ENCODE measurements at regions of chr6 and their contacts with region 1.

Region 1: DNA sequence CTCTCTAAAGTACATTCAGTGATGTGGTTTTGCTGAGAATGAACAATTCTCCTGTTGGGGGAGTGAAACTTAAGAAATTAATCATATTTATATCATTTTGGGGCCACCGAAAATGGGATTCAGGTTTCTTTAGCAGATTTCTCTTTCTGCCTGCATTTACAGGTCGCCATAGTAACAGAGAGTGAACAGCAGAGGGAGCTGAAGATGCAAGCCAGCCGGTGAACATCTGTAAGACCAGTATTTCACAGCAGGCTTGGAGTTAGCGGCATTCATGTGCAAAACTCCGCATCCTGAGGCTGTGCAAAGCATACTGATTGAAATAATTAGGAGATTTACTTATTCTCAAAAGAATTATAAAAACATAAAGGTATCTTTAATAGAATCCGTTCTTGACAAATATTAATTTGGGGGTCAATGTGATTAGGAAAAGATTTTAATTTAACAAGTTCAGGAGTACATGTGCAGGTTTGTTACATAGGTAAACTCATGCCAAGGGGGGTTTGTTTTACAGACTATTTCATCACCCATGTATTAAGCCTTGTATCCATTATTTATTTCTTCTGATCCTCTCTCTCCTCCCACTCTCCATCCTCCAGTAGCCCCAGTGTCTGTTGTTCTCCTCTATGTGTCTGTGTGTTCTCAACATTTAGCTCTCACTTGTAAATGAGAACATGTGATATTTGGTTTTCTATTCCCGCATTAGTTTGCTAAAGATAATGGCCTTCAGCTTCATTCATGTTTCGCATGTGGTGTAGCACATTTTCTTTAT is 17.8 kb upstream of the HSF2 start:
- DNase-seq: peak; percentile 61
- H3K4me3 Mint-ChIP-seq: no peak overlapping the region
- H3K27ac Mint-ChIP-seq: no peak overlapping the region
- H3K4me1 Mint-ChIP-seq: no peaks in the 10 kb centered on the region
- H3K27me3 Mint-ChIP-seq: peaks cover 37% of the 10 kb centered on the region
- CTCF ChIP-seq: peak; percentile 67

Region 2: GRCh38 chr6:122428781-122429180 is 47.1 kb after region 1 on chr6:
- CTCF ChIA-PET with region 1: no interaction called
- POLR2A ChIA-PET with region 1: no interaction called
- intact Hi-C with region 1: no loop called
- DNase-seq: no peak
- H3K4me3 Mint-ChIP-seq: no peak overlapping the region
- H3K27ac Mint-ChIP-seq: no peak overlapping the region
- H3K4me1 Mint-ChIP-seq: no peaks in the 10 kb centered on the region
- H3K27me3 Mint-ChIP-seq: no peaks in the 10 kb centered on the region
- CTCF ChIP-seq: no peak

Region 3: DNA sequence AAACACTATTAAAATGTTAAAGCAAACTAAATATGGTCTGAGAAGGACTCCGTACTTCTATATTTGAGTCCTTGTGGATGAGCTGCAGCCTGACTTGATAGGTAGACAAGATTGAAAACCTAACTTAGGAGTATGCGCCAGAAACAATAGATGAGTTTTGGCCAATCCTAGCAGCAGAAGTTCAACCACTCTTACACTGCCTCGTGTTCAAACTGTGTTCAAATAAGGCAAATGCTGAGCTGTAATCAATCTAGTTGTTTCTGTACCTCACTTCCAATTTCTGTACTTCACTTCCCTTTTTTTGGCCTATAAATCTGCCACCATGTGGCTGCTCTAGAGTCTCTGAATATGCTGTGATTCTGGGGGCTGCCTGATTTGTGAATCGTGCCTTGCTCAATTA is 103.1 kb after region 1 on chr6:
- CTCF ChIA-PET with region 1: no interaction called
- POLR2A ChIA-PET with region 1: no interaction called
- intact Hi-C with region 1: loop called (anchors 5 kb)
- DNase-seq: no peak
- H3K4me3 Mint-ChIP-seq: no peak overlapping the region
- H3K27ac Mint-ChIP-seq: no peak overlapping the region
- H3K4me1 Mint-ChIP-seq: no peaks in the 10 kb centered on the region
- H3K27me3 Mint-ChIP-seq: no peaks in the 10 kb centered on the region
- CTCF ChIP-seq: no peak

Measured in MCF 10A (cell line).